AG04449 (cell line): ENCODE measurements at regions of chr22 and their contacts with region 1.

Region 1: GRCh38 chr22:29524440-29525191 is 28.9 kb downstream of the THOC5 start:
- DNase-seq: no peak
- H3K4me3 ChIP-seq: no peak overlapping the region
- CTCF ChIP-seq: peak; percentile 49

Region 2: DNA sequence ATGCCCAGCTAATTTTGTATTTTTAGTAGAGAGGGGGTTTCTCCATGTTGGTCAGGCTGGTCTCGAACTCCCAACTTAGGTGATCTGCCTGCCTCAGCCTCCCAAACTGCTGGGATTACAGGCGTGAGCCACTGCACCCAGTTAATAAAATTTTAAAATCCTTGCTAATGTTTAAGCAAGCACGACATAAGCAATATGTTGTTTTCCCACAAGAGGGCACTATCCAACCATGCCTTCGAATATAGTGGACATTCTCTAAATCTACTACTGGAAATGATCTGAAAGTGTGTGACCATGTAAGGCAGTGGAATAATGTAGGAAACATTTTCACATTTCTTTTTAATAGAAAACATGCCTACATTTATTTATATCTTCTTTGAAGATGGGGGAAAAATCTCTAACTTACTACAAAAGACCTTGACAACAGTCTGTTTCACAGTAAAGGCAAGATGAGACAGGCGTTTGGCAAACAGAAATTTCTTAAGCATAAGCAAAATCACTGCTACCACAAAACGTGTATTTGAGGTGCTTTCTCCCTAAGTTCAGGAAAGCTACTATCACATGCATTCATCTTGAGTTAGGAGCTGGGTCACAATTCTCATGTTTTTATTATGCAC is 1643.7 kb before region 1 on chr22:
- CTCF ChIA-PET with region 1: no interaction called
- POLR2A ChIA-PET with region 1: no interaction called
- DNase-seq: peak; percentile 53
- H3K4me3 ChIP-seq: no peak overlapping the region
- CTCF ChIP-seq: peak; percentile 51

Region 3: DNA sequence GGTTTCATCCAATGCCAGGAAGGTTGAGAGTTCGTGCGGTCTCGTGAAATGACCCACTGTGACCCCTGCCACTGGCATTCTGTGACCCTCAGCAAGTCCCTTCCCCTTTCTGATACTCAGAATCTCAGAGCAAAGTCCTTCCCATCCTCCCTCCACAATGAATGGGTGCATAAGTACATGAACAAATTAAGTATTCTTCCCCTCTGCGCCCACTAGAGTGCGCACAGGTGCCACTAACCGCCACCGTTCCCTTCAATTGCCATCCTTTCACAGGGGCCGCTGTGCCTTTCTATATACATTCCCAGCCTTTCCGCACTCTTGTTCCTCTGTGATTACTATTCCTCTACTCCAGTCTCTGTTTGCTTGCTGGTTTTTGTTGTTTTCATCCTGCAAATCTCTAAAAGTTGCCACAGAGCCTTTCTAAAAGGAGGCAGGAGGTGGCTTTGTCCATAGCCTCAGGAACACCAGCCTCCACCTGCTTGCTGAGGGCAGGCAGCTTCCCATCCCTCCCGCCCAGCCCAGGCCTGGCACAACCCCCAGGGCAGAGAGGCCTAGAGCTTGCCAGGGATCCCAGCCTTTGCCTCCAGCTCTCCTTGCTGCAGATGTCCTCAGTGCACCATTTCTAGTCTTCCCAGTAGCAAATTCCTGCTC is 129.6 kb before region 1 on chr22:
- CTCF ChIA-PET with region 1: interaction called, 60 read pairs
- POLR2A ChIA-PET with region 1: no interaction called
- DNase-seq: no peak
- H3K4me3 ChIP-seq: no peak overlapping the region
- CTCF ChIP-seq: peak; percentile 84